Sigmoid colon (tissue), 7 donors: ENCODE measurements at regions of chr4 and their contacts with region 1.

Region 1: DNA sequence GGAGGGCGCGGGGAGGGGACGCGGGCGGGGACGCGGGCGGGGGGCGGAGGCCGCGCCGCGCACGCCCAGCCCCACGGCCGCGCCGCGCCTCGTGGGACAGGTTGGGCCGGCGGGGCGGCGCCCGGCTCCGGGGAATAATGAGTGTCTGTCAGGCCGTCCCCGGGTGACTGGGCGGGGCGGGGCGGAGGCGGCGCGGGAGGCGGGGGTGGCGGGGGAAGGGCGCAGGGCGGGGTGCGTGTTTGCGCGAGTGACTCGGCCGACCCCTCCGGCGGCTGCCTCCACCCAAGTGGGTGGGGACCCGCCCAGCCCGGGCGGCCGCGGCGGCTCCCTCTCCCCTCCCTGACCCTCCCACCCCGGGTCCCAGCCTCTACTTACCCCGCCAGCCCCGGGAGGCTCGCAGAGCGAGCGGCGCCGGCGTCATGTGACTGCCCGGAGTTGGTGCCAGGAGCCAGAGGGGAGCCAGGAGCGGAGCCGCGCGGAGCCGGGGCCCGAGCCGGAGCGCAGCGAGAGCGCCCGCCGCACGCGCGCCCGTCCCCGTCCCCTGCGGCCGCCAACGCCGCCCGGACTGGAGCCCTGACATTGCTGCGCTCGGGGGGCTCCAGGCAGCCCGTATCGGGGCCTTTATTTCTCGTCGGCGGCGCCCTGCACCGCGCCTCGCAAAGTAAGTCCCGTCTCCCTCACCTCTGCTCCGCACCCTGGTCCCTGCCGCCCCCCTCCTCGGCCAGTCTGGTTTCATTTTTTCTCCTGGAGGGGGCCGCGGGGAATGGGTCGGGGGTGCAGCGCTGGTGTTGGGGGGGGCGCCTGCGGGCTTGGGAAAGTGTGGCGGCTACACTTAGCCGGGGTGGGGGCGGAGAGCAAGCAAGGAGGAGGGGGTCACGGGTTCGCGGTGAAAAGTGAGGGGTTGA is at the start of gene KLF3:
- DNase-seq: peak; percentile 97
- H3K4me3 ChIP-seq: peak within 1 kb of the TSS; percentile 94 to 100 (median 98)
- H3K27ac ChIP-seq: peak within 1 kb of the TSS; percentile 99 to 100 (median 100)
- H3K4me1 ChIP-seq: peaks cover 0 to 50% (median 40%) of the 10 kb centered on the region in 4 donors
- H3K27me3 ChIP-seq: no peaks in the 10 kb centered on the region
- CTCF ChIP-seq: no peak
- EP300 ChIP-seq: peak in 2 of 4 donors; percentile 40 to 43
- POLR2A ChIP-seq: peak; percentile 52 to 54
- total RNA-seq, gene KLF3: 29.2 to 43.5 (median 38.0) TPM

Region 2: DNA sequence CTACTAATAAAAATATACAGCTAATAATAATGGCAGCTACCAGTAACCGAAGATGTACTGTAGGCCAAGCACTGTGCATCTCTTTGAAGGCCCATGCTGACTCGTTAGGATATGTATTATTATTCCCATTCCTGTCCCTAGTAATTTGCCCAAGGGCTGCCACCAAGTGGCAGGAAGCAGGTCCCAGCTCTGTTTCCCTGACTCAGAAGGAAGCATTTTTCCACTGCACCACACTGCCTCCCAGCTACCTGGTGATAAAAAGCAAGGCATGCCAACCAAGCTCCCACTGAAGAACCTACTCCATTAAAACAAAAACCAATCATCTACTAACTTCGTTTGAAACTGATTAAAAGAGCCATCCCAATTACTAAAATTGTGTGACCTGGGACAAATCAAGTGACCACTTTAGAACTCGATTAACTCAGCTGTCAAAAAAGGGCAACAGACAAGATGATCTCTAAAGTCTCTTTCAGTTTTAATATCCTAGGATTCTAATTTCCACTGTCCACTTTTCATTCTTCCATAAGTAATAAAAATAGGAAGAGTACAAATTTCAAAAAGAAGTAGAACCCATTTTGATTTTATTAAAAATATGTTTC is 861.9 kb before region 1 on chr4:
- intact Hi-C with region 1: loop called (anchors 10 kb)
- DNase-seq: no peak
- H3K4me3 ChIP-seq: no peak overlapping the region
- H3K27ac ChIP-seq: no peak overlapping the region
- H3K4me1 ChIP-seq: peaks cover 0 to 18% (median 10%) of the 10 kb centered on the region in 4 donors
- H3K27me3 ChIP-seq: no peaks in the 10 kb centered on the region
- CTCF ChIP-seq: peak in 3 of 4 experiments; percentile 18 to 59 (median 38)
- EP300 ChIP-seq: no peak
- POLR2A ChIP-seq: no peak

Region 3: GRCh38 chr4:38612646-38613414 is 51.2 kb before region 1 on chr4:
- intact Hi-C with region 1: loop called (anchors 5 kb)
- DNase-seq: no peak
- H3K4me3 ChIP-seq: no peak overlapping the region
- H3K27ac ChIP-seq: peak overlapping the region; percentile 4 to 44 (median 28)
- H3K4me1 ChIP-seq: peaks cover 0 to 38% (median 33%) of the 10 kb centered on the region in 4 donors
- H3K27me3 ChIP-seq: no peaks in the 10 kb centered on the region
- CTCF ChIP-seq: no peak
- EP300 ChIP-seq: no peak
- POLR2A ChIP-seq: no peak